ENCODE measurements at regions of chrX and their contacts with region 1.

Region 1: GRCh38 chrX:126785539-126785938 is 34.0 kb upstream of the PRR32 start:
- DNase-seq: no peak
- ATAC-seq: no peak
- H3K4me3 ChIP-seq: no peak overlapping the region
- H3K27ac ChIP-seq: no peak overlapping the region
- H3K4me1 ChIP-seq: no peaks in the 10 kb centered on the region
- H3K27me3 ChIP-seq: no peaks in the 10 kb centered on the region
- CTCF ChIP-seq: no peak

Region 2: GRCh38 chrX:126799059-126799458 is 13.5 kb after region 1 on chrX:
- intact Hi-C with region 1: loop called in 1 of 2 experiments (anchors 1 kb)
- DNase-seq: no peak
- ATAC-seq: peak in 1 of 4 donors; percentile 53
- H3K4me3 ChIP-seq: no peak overlapping the region
- H3K27ac ChIP-seq: no peak overlapping the region
- H3K4me1 ChIP-seq: no peaks in the 10 kb centered on the region
- H3K27me3 ChIP-seq: no peaks in the 10 kb centered on the region
- CTCF ChIP-seq: no peak